PC-3 (cell line): ENCODE measurements at regions of chr3 and their contacts with region 1.

Region 1: DNA sequence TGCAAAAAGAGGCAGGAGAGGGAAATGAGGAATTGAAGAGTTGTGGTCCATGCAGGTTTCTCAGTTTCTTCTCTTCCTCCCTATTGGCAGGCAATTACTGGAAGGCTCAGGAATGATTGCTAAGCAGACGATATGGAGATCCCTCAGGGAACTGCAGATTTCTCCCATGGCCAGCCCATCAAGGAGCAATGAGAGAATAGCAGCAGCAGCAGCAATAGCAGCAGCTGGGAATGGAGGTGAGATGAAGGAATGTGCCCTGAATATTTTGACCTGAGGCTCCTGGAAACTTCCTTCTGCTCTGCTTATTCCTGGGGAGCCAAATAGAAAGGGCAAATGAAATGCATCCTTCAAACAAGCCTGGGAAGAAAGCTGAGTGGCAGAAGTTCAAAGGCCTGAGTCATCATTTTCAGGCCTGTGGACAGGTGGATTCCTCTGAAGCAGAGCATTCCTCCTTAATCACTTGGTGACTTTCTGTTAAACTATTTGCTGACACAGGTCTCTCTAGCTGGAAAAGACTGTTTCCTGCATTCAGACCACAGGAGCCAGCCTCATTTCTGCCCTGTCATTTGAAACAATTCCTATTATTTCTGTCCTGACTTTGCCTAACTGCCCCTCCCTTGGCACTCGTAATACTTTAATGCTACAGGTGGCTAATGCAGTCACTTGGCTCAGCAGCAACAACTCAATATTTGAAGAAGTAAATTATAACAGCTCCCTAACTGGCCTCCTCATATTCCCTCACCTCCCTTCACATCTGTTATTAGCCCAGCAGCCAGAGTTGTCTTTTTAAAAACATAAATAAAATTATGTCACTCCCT is 146.9 kb upstream of the GADL1 start:
- DNase-seq: peak; percentile 99
- ATAC-seq: peak; percentile 93
- H3K4me3 ChIP-seq: no peak overlapping the region
- H3K27ac ChIP-seq: peak overlapping the region; percentile 83
- H3K4me1 ChIP-seq: peaks cover 44% of the 10 kb centered on the region
- H3K27me3 ChIP-seq: no peaks in the 10 kb centered on the region
- CTCF ChIP-seq: no peak

Region 2: GRCh38 chr3:30708472-30708871 is 332.9 kb before region 1 on chr3:
- CTCF ChIA-PET with region 1: no interaction called
- POLR2A ChIA-PET with region 1: no interaction called
- intact Hi-C with region 1: no loop called
- DNase-seq: peak; percentile 53
- ATAC-seq: peak; percentile 64
- H3K4me3 ChIP-seq: no peak overlapping the region
- H3K27ac ChIP-seq: no peak overlapping the region
- H3K4me1 ChIP-seq: peaks cover 7% of the 10 kb centered on the region
- H3K27me3 ChIP-seq: no peaks in the 10 kb centered on the region
- CTCF ChIP-seq: no peak

Region 3: DNA sequence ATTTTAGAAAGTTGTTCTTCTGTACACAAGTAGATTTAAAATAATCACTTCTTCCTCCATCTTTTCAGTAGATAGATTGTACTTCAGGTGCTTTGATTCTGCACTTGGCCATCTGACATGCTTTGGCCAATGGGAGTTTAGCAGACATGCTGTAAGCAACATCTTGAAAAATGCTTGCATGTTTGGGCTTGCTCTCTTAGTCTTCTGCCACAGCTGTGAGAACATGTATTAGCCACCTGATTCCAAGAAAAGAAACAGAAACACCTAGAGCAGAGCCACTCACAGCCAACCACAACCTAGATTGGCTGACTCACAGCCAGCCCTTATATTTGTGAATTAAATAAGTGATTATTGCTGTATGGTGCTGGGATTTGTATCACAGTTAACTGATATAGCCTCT is 76.8 kb before region 1 on chr3:
- CTCF ChIA-PET with region 1: no interaction called
- POLR2A ChIA-PET with region 1: no interaction called
- intact Hi-C with region 1: no loop called
- DNase-seq: no peak
- ATAC-seq: no peak
- H3K4me3 ChIP-seq: no peak overlapping the region
- H3K27ac ChIP-seq: no peak overlapping the region
- H3K4me1 ChIP-seq: no peaks in the 10 kb centered on the region
- H3K27me3 ChIP-seq: no peaks in the 10 kb centered on the region
- CTCF ChIP-seq: no peak

Region 4: GRCh38 chr3:31009881-31010280 is 31.5 kb before region 1 on chr3:
- CTCF ChIA-PET with region 1: no interaction called
- POLR2A ChIA-PET with region 1: no interaction called
- intact Hi-C with region 1: loop called (anchors 2 kb)
- DNase-seq: peak; percentile 56
- ATAC-seq: peak; percentile 3; the same call in 1 of the 2 replicates
- H3K4me3 ChIP-seq: no peak overlapping the region
- H3K27ac ChIP-seq: peak overlapping the region; percentile 81
- H3K4me1 ChIP-seq: peaks cover 51% of the 10 kb centered on the region
- H3K27me3 ChIP-seq: no peaks in the 10 kb centered on the region
- CTCF ChIP-seq: no peak

Region 5: GRCh38 chr3:31067009-31067408 is 25.6 kb after region 1 on chr3:
- CTCF ChIA-PET with region 1: no interaction called
- POLR2A ChIA-PET with region 1: no interaction called
- intact Hi-C with region 1: loop called (anchors 2 kb)
- DNase-seq: peak; percentile 96
- ATAC-seq: peak; percentile 99
- H3K4me3 ChIP-seq: no peak overlapping the region
- H3K27ac ChIP-seq: peak overlapping the region; percentile 48
- H3K4me1 ChIP-seq: peaks cover 12% of the 10 kb centered on the region
- H3K27me3 ChIP-seq: no peaks in the 10 kb centered on the region
- CTCF ChIP-seq: no peak

Region 6: GRCh38 chr3:31077021-31077601 is 35.7 kb after region 1 on chr3:
- CTCF ChIA-PET with region 1: no interaction called
- POLR2A ChIA-PET with region 1: no interaction called
- intact Hi-C with region 1: no loop called
- DNase-seq: peak; percentile 97
- ATAC-seq: peak; percentile 96
- H3K4me3 ChIP-seq: peak overlapping the region; percentile 20
- H3K27ac ChIP-seq: peak overlapping the region; percentile 96
- H3K4me1 ChIP-seq: peaks cover 44% of the 10 kb centered on the region
- H3K27me3 ChIP-seq: no peaks in the 10 kb centered on the region
- CTCF ChIP-seq: no peak

Region 7: GRCh38 chr3:31142127-31142526 is 100.8 kb after region 1 on chr3:
- CTCF ChIA-PET with region 1: no interaction called
- POLR2A ChIA-PET with region 1: no interaction called
- intact Hi-C with region 1: no loop called
- DNase-seq: peak; percentile 63
- ATAC-seq: no peak
- H3K4me3 ChIP-seq: no peak overlapping the region
- H3K27ac ChIP-seq: no peak overlapping the region
- H3K4me1 ChIP-seq: peaks cover 29% of the 10 kb centered on the region
- H3K27me3 ChIP-seq: no peaks in the 10 kb centered on the region
- CTCF ChIP-seq: no peak